ENCODE measurements at regions of chr7 and their contacts with region 1.

Region 1: GRCh38 chr7:35906191-35906908 is 105.5 kb downstream of the SEPTIN7 start:
- DNase-seq: peak in 1 of 2 donors; percentile 43
- H3K4me3 ChIP-seq: no peak overlapping the region
- H3K27ac ChIP-seq: no peak overlapping the region
- H3K4me1 ChIP-seq: peaks cover 0 to 13% (median 8%) of the 10 kb centered on the region in 4 donors
- H3K27me3 ChIP-seq: no peaks in the 10 kb centered on the region
- CTCF ChIP-seq: peak; percentile 92 to 93

Region 2: GRCh38 chr7:35707422-35707821 is 198.9 kb before region 1 on chr7:
- intact Hi-C with region 1: loop called (anchors 5 kb)
- DNase-seq: no peak
- H3K4me3 ChIP-seq: no peak overlapping the region
- H3K27ac ChIP-seq: no peak overlapping the region
- H3K4me1 ChIP-seq: peaks cover 0 to 6% (median 0%) of the 10 kb centered on the region in 4 donors
- H3K27me3 ChIP-seq: no peaks in the 10 kb centered on the region
- CTCF ChIP-seq: no peak

Region 3: GRCh38 chr7:36312344-36313334 is 406.3 kb after region 1 on chr7:
- intact Hi-C with region 1: loop called (anchors 10 kb)
- DNase-seq: no peak
- H3K4me3 ChIP-seq: no peak overlapping the region
- H3K27ac ChIP-seq: no peak overlapping the region
- H3K4me1 ChIP-seq: no peaks in the 10 kb centered on the region
- H3K27me3 ChIP-seq: no peaks in the 10 kb centered on the region
- CTCF ChIP-seq: no peak